ENCODE measurements at regions of chr4 and their contacts with region 1.

Region 1: GRCh38 chr4:29619168-29619567 is 1101.0 kb upstream of the PCDH7 start:
- DNase-seq: no peak
- ATAC-seq: no peak
- H3K4me3 ChIP-seq: no peak overlapping the region
- H3K4me3 Mint-ChIP-seq: no peak overlapping the region
- H3K27ac ChIP-seq: no peak overlapping the region
- H3K27ac Mint-ChIP-seq: no peak overlapping the region
- H3K4me1 ChIP-seq: no peaks in the 10 kb centered on the region
- H3K4me1 Mint-ChIP-seq: no peaks in the 10 kb centered on the region
- H3K27me3 ChIP-seq: no peaks in the 10 kb centered on the region
- H3K27me3 Mint-ChIP-seq: no peaks in the 10 kb centered on the region
- CTCF ChIP-seq: no peak

Region 2: DNA sequence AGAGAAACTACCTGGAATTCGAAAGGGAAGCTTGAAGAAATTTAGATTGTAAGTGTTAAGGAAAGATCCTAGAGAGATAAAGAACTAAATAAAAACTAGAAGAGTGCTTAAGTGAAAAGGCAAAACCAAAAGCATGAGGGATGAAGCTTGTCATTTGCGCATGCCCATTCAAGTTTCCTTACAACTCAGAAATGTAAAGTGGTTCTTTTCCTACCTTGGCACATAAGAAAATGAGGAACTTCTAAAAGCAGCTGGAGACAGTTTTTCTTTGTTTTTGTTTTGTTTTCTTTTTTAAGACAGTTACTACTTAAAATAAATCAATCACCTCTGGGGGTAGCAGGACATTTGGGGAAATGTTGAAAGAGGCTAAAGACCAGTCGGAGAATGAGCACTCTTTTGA is 203.4 kb before region 1 on chr4:
- CTCF ChIA-PET with region 1: no interaction called
- POLR2A ChIA-PET with region 1: no interaction called
- intact Hi-C with region 1: loop called in 1 of 2 experiments (anchors 5 kb)
- DNase-seq: no peak
- ATAC-seq: no peak
- H3K4me3 ChIP-seq: no peak overlapping the region
- H3K4me3 Mint-ChIP-seq: no peak overlapping the region
- H3K27ac ChIP-seq: no peak overlapping the region
- H3K27ac Mint-ChIP-seq: no peak overlapping the region
- H3K4me1 ChIP-seq: no peaks in the 10 kb centered on the region
- H3K4me1 Mint-ChIP-seq: no peaks in the 10 kb centered on the region
- H3K27me3 ChIP-seq: no peaks in the 10 kb centered on the region
- H3K27me3 Mint-ChIP-seq: no peaks in the 10 kb centered on the region
- CTCF ChIP-seq: no peak

Region 3: GRCh38 chr4:29540439-29541102 is 78.6 kb before region 1 on chr4:
- CTCF ChIA-PET with region 1: no interaction called
- POLR2A ChIA-PET with region 1: no interaction called
- intact Hi-C with region 1: no loop called
- DNase-seq: no peak
- ATAC-seq: no peak
- H3K4me3 ChIP-seq: no peak overlapping the region
- H3K4me3 Mint-ChIP-seq: no peak overlapping the region
- H3K27ac ChIP-seq: no peak overlapping the region
- H3K27ac Mint-ChIP-seq: no peak overlapping the region
- H3K4me1 ChIP-seq: no peaks in the 10 kb centered on the region
- H3K4me1 Mint-ChIP-seq: no peaks in the 10 kb centered on the region
- H3K27me3 ChIP-seq: no peaks in the 10 kb centered on the region
- H3K27me3 Mint-ChIP-seq: no peaks in the 10 kb centered on the region
- CTCF ChIP-seq: no peak

Region 4: DNA sequence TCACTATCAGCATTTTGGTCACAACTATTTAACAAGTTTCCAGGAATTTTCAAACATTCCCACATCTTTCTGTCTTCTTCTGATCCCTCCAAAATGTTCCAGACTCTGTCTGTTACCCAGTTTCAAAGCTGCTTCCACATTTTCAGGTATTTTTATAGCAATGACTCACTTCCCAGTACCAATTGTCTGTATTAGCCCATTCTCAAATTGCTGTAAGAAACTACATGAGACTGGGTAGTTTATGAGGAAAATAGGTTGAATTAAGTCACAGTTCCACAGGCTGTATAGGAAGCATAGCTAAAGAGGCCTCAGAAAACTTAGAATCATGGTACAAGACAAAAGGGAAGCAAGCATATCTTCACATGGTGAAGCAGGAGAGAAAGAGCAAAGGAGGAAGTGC is 626.0 kb after region 1 on chr4:
- CTCF ChIA-PET with region 1: no interaction called
- POLR2A ChIA-PET with region 1: no interaction called
- intact Hi-C with region 1: no loop called
- DNase-seq: no peak
- ATAC-seq: no peak
- H3K4me3 ChIP-seq: no peak overlapping the region
- H3K4me3 Mint-ChIP-seq: no peak overlapping the region
- H3K27ac ChIP-seq: no peak overlapping the region
- H3K27ac Mint-ChIP-seq: no peak overlapping the region
- H3K4me1 ChIP-seq: no peaks in the 10 kb centered on the region
- H3K4me1 Mint-ChIP-seq: no peaks in the 10 kb centered on the region
- H3K27me3 ChIP-seq: no peaks in the 10 kb centered on the region
- H3K27me3 Mint-ChIP-seq: no peaks in the 10 kb centered on the region
- CTCF ChIP-seq: no peak

Region 5: GRCh38 chr4:30427932-30428331 is 808.8 kb after region 1 on chr4:
- CTCF ChIA-PET with region 1: no interaction called
- POLR2A ChIA-PET with region 1: no interaction called
- intact Hi-C with region 1: no loop called
- DNase-seq: no peak
- ATAC-seq: no peak
- H3K4me3 ChIP-seq: no peak overlapping the region
- H3K4me3 Mint-ChIP-seq: no peak overlapping the region
- H3K27ac ChIP-seq: no peak overlapping the region
- H3K27ac Mint-ChIP-seq: no peak overlapping the region
- H3K4me1 ChIP-seq: no peaks in the 10 kb centered on the region
- H3K4me1 Mint-ChIP-seq: no peaks in the 10 kb centered on the region
- H3K27me3 ChIP-seq: no peaks in the 10 kb centered on the region
- H3K27me3 Mint-ChIP-seq: no peaks in the 10 kb centered on the region
- CTCF ChIP-seq: no peak